Cardiac septum (tissue), 1 donor: ENCODE measurements at regions of chr11 and their contacts with region 1.

Region 1: DNA sequence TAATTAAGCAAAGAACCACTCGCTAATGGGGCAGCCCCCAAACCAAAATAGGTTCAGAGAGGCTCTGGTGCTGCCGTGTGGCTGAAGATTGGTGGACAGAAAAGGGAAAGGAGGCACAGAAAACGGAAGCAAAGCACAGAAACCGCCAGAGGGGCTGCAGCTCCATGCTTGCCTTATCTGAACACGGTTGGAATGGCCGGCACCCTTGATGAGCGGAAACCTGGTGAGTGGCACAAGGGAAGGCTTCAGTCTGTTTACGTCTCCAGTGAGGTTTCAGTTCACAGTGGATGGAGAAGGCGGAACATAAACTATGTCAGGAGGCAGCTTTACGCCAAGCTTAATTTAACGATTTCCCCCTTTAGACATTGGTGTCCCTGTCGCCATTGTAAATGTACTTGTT is 5.2 kb upstream of the PRR33 start:
- DNase-seq: no peak

Region 2: DNA sequence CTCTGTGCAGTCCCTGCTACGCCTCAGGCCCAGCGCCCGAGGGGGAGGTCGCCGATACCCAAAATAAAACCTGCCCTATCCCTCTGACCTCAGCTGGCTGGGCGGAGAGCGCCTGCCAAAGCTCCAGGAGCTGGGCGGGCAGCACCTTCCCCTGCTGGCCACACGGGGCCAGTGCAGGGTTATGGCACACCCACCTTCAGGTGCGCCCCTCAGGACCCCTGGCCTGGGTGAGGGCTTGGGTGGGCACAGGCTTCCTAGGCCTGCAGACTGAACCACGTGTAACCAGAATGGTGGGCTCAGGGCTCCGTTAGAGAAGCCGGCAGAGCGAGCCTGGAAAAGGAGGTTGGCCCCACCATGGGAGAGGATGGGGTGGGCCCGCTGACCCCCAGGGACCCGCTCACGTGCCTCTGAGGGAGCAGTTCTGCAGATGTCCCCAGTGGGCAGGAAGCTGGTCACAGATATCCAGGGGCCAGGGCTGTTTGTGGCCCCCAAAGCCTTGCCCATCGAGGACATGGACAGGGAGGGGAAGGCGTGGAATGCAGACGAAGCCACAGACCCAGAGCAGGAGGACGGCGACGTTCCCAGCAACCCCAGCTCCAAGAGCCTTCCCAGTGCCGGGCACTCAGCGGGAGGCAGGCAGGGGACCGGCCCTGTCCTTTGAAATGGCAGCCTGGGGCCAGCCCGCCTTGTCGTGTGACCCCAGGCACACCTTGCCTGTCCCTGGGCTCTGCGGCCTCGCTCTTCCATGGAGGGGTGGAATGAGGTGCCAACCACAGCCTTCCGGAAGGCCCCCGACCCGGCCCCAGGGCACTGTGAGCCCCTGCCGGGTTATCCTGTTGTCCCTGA is 21.0 kb after region 1 on chr11:
- intact Hi-C with region 1: loop called (anchors 1 kb)
- DNase-seq: no peak

Region 3: GRCh38 chr11:1943977-1944376 is 47.1 kb after region 1 on chr11:
- intact Hi-C with region 1: loop called (anchors 5 kb)
- DNase-seq: peak; percentile 63